ENCODE measurements at regions of chrX and their contacts with region 1.

Region 1: GRCh38 chrX:154490414-154491083 is at the start of gene SLC10A3:
- H3K4me3 ChIP-seq: peak within 1 kb of the TSS; percentile 56
- H3K27ac ChIP-seq: peak within 1 kb of the TSS; percentile 76
- H3K4me1 ChIP-seq: no peaks in the 10 kb centered on the region; the same call in 1 of the 2 replicates
- CTCF ChIP-seq: peak; percentile 69; the same call in 1 of the 2 replicates

Region 2: GRCh38 chrX:154370882-154371770 is 119.4 kb before region 1 on chrX:
- CTCF ChIA-PET with region 1: interaction called, 4 read pairs
- POLR2A ChIA-PET with region 1: interaction called, 12 read pairs
- H3K4me3 ChIP-seq: peak overlapping the region; percentile 68
- H3K27ac ChIP-seq: peak overlapping the region; percentile 93
- H3K4me1 ChIP-seq: peaks cover 16% of the 10 kb centered on the region
- CTCF ChIP-seq: peak; percentile 46

Region 3: GRCh38 chrX:154411322-154411980 is 79.1 kb before region 1 on chrX and contains the start of gene TAFAZZIN:
- CTCF ChIA-PET with region 1: no interaction called
- POLR2A ChIA-PET with region 1: interaction called, 16 read pairs
- H3K4me3 ChIP-seq: peak within 1 kb of the TSS; percentile 57
- H3K27ac ChIP-seq: peak within 1 kb of the TSS; percentile 92
- H3K4me1 ChIP-seq: no peaks in the 10 kb centered on the region; the same call in 1 of the 2 replicates
- CTCF ChIP-seq: no peak; the same call in 1 of the 2 replicates

Region 4: DNA sequence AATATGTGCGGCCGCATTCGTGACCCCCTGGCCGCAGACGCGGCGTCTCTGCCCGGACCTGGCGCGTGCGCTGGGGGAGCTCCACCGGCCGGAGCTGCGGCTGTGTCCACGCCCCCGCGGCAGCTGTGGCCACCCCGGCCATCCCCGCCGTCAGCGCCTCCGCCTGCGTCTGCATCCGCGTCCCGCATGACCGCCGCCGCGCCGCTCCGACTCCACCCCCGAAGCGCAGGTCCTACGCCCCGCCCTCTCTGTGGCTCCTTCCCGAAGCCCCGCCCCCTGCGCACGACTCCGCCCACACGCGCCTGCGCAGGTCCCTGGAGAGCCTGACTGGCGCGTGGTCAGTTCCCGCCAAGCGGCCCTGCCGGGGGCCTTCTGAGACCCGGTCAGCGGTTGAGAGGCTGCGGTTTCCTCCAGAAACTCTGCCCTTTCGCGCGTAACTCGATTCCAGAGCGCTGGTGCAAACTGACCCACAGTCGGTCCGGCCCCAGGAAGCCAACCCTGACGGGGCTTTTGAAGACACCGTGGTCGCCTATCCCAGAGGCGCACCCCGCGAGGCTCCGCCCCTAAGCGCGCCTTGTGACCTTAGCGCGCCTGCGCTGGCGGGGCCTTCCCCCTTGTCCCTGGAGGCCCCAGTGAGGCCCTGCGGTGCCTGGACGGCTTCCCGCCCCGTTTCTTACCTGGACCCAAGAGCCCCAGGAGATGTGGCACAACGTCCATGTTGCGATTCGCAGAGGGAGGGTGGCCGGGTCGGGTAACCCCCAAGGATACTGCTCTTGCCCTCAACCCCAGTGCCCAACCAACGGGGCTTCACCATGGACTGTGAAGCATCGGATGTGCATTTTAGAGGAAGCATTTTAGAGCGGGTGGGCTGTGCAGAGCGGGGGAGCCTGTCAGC is 11.6 kb before region 1 on chrX and contains the start of gene LAGE3:
- CTCF ChIA-PET with region 1: interaction called, 6 read pairs
- POLR2A ChIA-PET with region 1: interaction called, 14 read pairs
- H3K4me3 ChIP-seq: peak within 1 kb of the TSS; percentile 55
- H3K27ac ChIP-seq: peak within 1 kb of the TSS; percentile 94
- H3K4me1 ChIP-seq: no peaks in the 10 kb centered on the region; the same call in 1 of the 2 replicates
- CTCF ChIP-seq: no peak

Region 5: DNA sequence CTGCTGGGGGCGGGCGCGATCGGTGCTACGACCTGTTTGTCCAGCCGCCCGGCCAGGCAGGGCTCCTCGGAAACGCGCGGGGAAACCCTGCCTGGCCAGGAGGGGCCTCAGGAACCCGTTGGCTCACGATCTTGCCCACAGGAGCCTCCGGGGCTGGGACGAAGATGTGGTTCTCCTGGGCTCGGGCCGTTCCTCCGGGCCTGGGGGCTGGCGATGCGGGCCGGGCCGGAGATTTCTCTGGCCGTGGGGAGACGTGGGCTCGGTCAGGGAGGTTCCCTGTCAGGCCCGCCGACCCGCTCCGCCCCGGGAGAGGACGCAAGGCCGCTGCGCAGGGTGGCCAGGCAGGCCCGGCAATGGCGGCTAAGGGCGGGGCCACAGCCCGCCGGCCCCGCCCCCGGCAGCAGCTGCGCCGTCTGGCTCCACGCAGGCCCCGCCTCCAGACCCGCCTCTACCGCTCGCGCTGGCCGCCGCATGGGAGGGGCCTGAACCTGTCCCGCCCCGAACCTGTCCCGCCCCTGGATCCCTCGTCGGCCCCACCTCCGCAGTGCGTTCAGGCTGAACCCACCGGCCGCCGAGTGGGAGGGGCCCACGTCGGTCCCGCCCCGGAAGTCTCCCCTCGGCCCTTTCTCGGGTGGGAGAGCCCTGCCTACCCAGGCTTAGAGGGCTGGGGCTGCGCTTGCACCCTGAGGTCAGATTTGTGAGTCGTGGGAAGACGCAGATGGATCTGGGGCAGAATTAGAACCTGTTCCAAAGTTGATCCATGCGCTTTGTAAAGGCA is 25.5 kb after region 1 on chrX and contains the start of gene FAM3A:
- CTCF ChIA-PET with region 1: interaction called, 4 read pairs
- POLR2A ChIA-PET with region 1: interaction called, 35 read pairs
- H3K4me3 ChIP-seq: peak within 1 kb of the TSS; percentile 71
- H3K27ac ChIP-seq: peak within 1 kb of the TSS; percentile 77
- H3K4me1 ChIP-seq: peaks cover 3% of the 10 kb centered on the region; the same call in 1 of the 2 replicates
- CTCF ChIP-seq: no peak

Measured in HEK293 (cell line).